Astrocyte of the cerebellum (primary cell): ENCODE measurements at regions of chr7 and their contacts with region 1.

Region 1: GRCh38 chr7:42485301-42485766 is 248.3 kb upstream of the GLI3 start:
- DNase-seq: no peak
- H3K4me3 ChIP-seq: no peak overlapping the region
- CTCF ChIP-seq: no peak

Region 2: DNA sequence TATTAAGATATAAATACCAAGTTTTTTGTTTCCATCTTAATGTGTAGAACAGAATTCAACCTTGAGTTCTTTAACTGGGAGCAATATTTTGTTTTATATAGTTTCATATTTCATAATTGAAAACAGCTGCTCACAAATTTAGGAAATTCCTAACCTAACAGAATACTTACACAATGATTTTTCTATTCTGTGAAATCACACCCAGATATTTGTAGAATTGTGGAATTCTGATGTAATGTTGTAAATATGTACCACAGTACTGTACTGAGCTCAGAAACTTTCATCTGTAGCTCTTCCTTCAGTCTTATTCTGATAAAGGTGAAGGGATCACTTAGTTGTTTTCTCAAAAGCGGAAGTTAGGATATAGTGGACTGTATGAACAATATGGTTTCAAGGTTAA is 104.9 kb before region 1 on chr7:
- in situ Hi-C with region 1: loop called (anchors 5 kb)
- DNase-seq: no peak
- H3K4me3 ChIP-seq: no peak overlapping the region
- CTCF ChIP-seq: no peak

Region 3: GRCh38 chr7:42395607-42396006 is 89.7 kb before region 1 on chr7:
- in situ Hi-C with region 1: no loop called
- DNase-seq: no peak
- H3K4me3 ChIP-seq: no peak overlapping the region
- CTCF ChIP-seq: no peak